K562 (cell line): ENCODE measurements at regions of chr1 and their contacts with region 1.

Region 1: DNA sequence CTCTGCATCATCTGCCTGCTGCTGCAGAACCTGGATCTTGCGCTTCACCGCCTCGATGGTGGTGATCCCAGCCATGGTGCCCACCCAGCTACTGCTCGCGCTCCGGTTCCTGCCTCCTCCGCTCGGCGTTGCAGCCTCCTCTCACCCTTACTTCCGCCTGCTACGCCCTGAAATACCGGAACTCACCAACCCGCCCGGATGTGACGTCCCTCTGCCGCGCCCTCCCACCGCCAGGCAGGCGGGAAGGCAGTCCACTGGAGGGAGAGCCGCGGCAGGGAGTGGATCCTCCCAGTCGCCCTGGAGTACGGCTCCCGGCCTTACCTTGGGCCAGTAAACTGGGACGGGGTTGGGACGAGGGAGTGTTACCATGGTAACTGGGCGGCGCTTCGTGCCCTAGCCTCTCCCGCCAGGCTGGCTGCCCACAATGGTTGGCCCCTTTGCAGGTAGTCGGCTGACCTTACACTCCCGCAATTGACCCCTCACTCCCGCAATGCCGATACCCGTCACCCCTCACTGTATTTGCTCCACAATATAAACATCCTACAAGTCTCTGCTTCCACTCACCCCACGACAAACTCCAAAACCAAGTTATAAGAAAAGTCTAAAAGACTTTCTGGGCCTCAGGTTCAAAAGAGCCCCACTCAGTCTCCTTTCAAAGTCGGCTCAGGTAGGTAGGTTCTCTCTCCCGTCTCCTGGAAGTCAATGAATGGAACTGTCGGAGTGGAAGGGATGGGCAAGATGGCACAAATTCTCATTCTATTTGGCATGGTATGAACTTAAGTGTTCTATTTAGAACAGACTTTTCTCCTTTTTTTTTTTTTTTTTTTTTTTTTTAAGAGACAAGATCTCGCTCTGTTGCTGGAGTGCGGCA is 8.6 kb downstream of the TPM3 start:
- DNase-seq: peak; percentile 96 to 98 (median 96)
- ATAC-seq: peak; percentile 89
- H3K4me3 ChIP-seq: peak overlapping the region; percentile 71
- H3K27ac ChIP-seq: peak overlapping the region; percentile 90
- H3K4me1 ChIP-seq: peaks cover 26 to 53% of the 10 kb centered on the region in 2 experiments
- H3K27me3 ChIP-seq: no peaks in the 10 kb centered on the region
- CTCF ChIP-seq: 0 out of 6 replicates have a peak, but pooled peaks of 1 of the 3 experiments have one; percentile 0
- EP300 ChIP-seq: no peak
- POLR2A ChIP-seq: peak; percentile 98
- RAD21 ChIP-seq: no peak; a peak in 1 of 4 replicates

Region 2: GRCh38 chr1:154129391-154129970 is 53.8 kb before region 1 on chr1:
- CTCF ChIA-PET with region 1: no interaction called
- POLR2A ChIA-PET with region 1: no interaction called
- in situ Hi-C with region 1: no loop called
- intact Hi-C with region 1: no loop called
- DNase-seq: no peak
- ATAC-seq: no peak
- H3K4me3 ChIP-seq: no peak overlapping the region
- H3K27ac ChIP-seq: no peak overlapping the region
- H3K4me1 ChIP-seq: no peaks in the 10 kb centered on the region
- H3K27me3 ChIP-seq: no peaks in the 10 kb centered on the region
- CTCF ChIP-seq: no peak
- EP300 ChIP-seq: no peak
- POLR2A ChIP-seq: no peak
- RAD21 ChIP-seq: no peak

Region 3: GRCh38 chr1:154145986-154146385 is 37.3 kb before region 1 on chr1:
- CTCF ChIA-PET with region 1: no interaction called
- POLR2A ChIA-PET with region 1: no interaction called
- in situ Hi-C with region 1: no loop called
- intact Hi-C with region 1: loop called (anchors 5 kb)
- DNase-seq: no peak
- ATAC-seq: 0 out of 3 replicates have a peak, but pooled peaks have one; percentile 27
- H3K4me3 ChIP-seq: no peak overlapping the region
- H3K27ac ChIP-seq: no peak overlapping the region
- H3K4me1 ChIP-seq: peaks cover 2 to 3% of the 10 kb centered on the region in 2 experiments; a peak in 2 of 5 replicates
- H3K27me3 ChIP-seq: no peaks in the 10 kb centered on the region
- CTCF ChIP-seq: peak in 2 of 3 experiments; percentile 23 to 36; a peak in 2 of 6 replicates
- EP300 ChIP-seq: no peak
- POLR2A ChIP-seq: no peak
- RAD21 ChIP-seq: no peak

Region 4: DNA sequence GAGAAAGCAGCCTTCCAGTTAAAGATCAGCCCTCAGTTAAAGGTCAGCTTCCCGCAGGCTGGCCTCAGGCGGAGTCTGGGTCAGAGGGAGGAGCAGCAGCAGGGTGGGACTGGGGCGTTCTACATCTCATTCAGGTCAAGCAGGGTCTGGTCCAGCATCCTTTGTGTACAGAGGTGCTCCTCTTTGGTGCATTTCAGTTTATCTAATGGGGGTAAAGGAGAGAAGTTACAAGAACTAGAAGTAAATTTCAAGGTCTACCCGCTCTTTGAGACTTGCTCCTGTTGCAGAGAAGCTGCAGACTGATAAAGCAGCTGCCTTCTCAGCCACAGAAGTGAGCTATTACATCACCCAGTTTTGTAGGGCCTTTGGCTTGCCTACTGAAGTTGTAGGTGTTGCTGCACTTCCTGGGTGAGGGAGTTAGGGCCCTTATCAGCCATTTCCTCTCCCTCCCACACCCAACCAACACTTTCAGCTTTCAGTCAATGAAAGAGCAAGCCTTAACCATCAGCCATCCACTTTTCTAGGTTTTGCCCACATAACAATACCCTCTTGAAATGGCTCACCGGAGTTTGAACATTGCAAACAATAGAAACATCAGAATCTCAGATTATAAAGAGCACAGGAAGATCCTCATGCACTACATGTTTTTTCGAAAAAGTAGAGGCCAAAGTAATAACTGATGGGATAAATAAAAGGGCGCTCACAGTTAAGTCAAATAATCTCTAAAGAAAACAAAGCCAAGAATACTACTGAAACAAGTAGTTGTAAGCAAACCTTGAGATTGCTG is 25.6 kb before region 1 on chr1:
- CTCF ChIA-PET with region 1: interaction called, 3 read pairs
- POLR2A ChIA-PET with region 1: interaction called, 7 read pairs
- in situ Hi-C with region 1: no loop called
- intact Hi-C with region 1: loop called (anchors 2 kb)
- DNase-seq: peak; percentile 61 to 95 (median 76)
- ATAC-seq: peak; percentile 95
- H3K4me3 ChIP-seq: no peak overlapping the region
- H3K27ac ChIP-seq: peak overlapping the region; percentile 91
- H3K4me1 ChIP-seq: peaks cover 20 to 44% of the 10 kb centered on the region in 2 experiments
- H3K27me3 ChIP-seq: no peaks in the 10 kb centered on the region
- CTCF ChIP-seq: no peak
- EP300 ChIP-seq: peak; percentile 93
- POLR2A ChIP-seq: peak; percentile 69
- RAD21 ChIP-seq: peak in 1 of 2 experiments; percentile 30; a peak in 2 of 4 replicates

Region 5: GRCh38 chr1:154220071-154220969 is 37.0 kb after region 1 on chr1 and contains the start of gene UBAP2L:
- CTCF ChIA-PET with region 1: no interaction called
- POLR2A ChIA-PET with region 1: interaction called, 4 read pairs
- in situ Hi-C with region 1: no loop called
- intact Hi-C with region 1: loop called (anchors 5 kb)
- DNase-seq: peak; percentile 84 to 100 (median 90)
- ATAC-seq: peak; percentile 92
- H3K4me3 ChIP-seq: peak within 1 kb of the TSS; percentile 76
- H3K27ac ChIP-seq: peak within 1 kb of the TSS; percentile 99
- H3K4me1 ChIP-seq: peaks cover 3 to 20% of the 10 kb centered on the region in 2 experiments; a peak in 3 of 5 replicates
- H3K27me3 ChIP-seq: no peaks in the 10 kb centered on the region
- CTCF ChIP-seq: no peak; a peak in 1 of 6 replicates
- EP300 ChIP-seq: no peak
- POLR2A ChIP-seq: peak; percentile 94
- RAD21 ChIP-seq: no peak
- polyA plus RNA-seq, gene UBAP2L: 75.0 to 92.3 TPM

Region 6: GRCh38 chr1:154272217-154272998 is 89.1 kb after region 1 on chr1 and contains the start of gene HAX1:
- CTCF ChIA-PET with region 1: interaction called, 15 read pairs
- POLR2A ChIA-PET with region 1: no interaction called
- in situ Hi-C with region 1: no loop called
- intact Hi-C with region 1: loop called (anchors 1 kb)
- DNase-seq: peak; percentile 91 to 98 (median 92)
- ATAC-seq: peak; percentile 95
- H3K4me3 ChIP-seq: peak within 1 kb of the TSS; percentile 88
- H3K27ac ChIP-seq: peak within 1 kb of the TSS; percentile 79
- H3K4me1 ChIP-seq: peaks cover 3 to 5% of the 10 kb centered on the region in 2 experiments; a peak in 4 of 5 replicates
- H3K27me3 ChIP-seq: no peaks in the 10 kb centered on the region; a peak in 1 of 5 replicates
- CTCF ChIP-seq: peak; percentile 85 to 97 (median 93)
- EP300 ChIP-seq: peak; percentile 58
- POLR2A ChIP-seq: peak; percentile 89
- RAD21 ChIP-seq: peak; percentile 91 to 97
- polyA plus RNA-seq, gene HAX1: 447 to 492 TPM

Region 7: GRCh38 chr1:154335025-154335714 is 151.9 kb after region 1 on chr1:
- CTCF ChIA-PET with region 1: no interaction called
- POLR2A ChIA-PET with region 1: no interaction called
- in situ Hi-C with region 1: no loop called
- intact Hi-C with region 1: loop called (anchors 2 kb)
- DNase-seq: peak; percentile 79 to 89 (median 80)
- ATAC-seq: peak; percentile 95
- H3K4me3 ChIP-seq: no peak overlapping the region
- H3K27ac ChIP-seq: no peak overlapping the region
- H3K4me1 ChIP-seq: peaks cover 0 to 14% of the 10 kb centered on the region in 2 experiments; a peak in 3 of 5 replicates
- H3K27me3 ChIP-seq: no peaks in the 10 kb centered on the region
- CTCF ChIP-seq: peak; percentile 86 to 92 (median 90)
- EP300 ChIP-seq: 0 out of 2 replicates have a peak, but pooled peaks have one; percentile 4
- POLR2A ChIP-seq: no peak
- RAD21 ChIP-seq: peak; percentile 69 to 87

Region 8: DNA sequence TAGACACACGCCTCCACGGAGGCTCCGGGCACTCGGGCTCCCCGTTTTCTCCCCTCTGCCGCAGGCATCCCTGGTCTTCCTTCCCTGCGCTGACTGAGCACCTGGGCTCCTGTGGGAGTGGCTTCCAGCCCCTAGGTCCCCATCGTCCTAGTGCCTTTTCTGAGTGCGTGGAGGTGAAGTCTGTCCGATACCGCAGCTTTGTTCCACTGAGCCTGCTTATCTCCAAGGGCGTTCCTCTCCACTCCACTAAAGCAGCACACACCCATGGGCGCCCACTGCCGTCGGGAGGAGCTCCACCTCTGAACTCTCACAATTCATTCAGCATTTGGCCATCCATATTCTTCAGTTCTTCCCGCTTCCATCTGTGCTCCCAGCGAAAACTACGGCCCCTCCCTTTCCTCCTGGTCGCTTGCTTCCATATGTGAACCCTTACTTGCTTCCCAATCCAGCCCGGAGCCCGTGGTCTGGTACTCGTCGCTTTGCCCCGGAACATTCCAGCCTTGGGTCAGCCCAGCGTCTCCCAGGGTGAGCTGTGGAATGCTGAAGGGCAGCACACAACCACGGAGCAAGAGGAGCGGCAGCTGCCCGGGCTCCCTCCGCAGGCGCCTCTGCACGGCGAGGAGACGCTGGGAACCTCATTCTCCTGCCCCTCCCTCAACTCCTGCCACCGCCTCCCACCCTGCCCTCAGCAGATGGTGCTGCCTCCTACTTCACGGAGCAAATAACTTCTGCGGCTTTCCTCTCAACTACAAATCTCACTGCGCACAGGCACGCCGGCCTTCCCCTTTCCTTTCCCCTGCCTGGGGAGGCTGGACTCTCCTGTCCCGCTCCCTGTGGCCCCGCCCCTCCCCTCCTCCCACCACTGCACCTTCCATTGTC is 169.5 kb after region 1 on chr1:
- CTCF ChIA-PET with region 1: no interaction called
- POLR2A ChIA-PET with region 1: no interaction called
- in situ Hi-C with region 1: no loop called
- intact Hi-C with region 1: loop called (anchors 5 kb)
- DNase-seq: peak; percentile 62 to 87 (median 66)
- ATAC-seq: peak; percentile 82
- H3K4me3 ChIP-seq: peak overlapping the region; percentile 29
- H3K27ac ChIP-seq: peak overlapping the region; percentile 20; the same call in 2 of the 3 replicates
- H3K4me1 ChIP-seq: peaks cover 31 to 46% of the 10 kb centered on the region in 2 experiments
- H3K27me3 ChIP-seq: no peaks in the 10 kb centered on the region
- CTCF ChIP-seq: peak; percentile 35 to 46 (median 44)
- EP300 ChIP-seq: peak; percentile 50
- POLR2A ChIP-seq: no peak
- RAD21 ChIP-seq: peak in 1 of 2 experiments; percentile 4; a peak in 1 of 4 replicates